B cell (primary cell): ENCODE measurements at regions of chr11 and their contacts with region 1.

Region 1: GRCh38 chr11:72238040-72238450 is 5.9 kb downstream of the PHOX2A start:
- DNase-seq: peak; percentile 61
- ATAC-seq: peak; percentile 67
- H3K4me3 ChIP-seq: no peak overlapping the region
- H3K4me3 Mint-ChIP-seq: peak overlapping the region; percentile 19
- H3K27ac ChIP-seq: no peak overlapping the region
- H3K27ac Mint-ChIP-seq: no peak overlapping the region
- H3K4me1 ChIP-seq: peaks cover 34% of the 10 kb centered on the region in 2 donors
- H3K4me1 Mint-ChIP-seq: peaks cover 35% of the 10 kb centered on the region
- H3K27me3 ChIP-seq: peaks cover 0 to 34% (median 18%) of the 10 kb centered on the region in 4 experiments
- H3K27me3 Mint-ChIP-seq: peaks cover 31% of the 10 kb centered on the region
- CTCF ChIP-seq: peak; percentile 58

Region 2: DNA sequence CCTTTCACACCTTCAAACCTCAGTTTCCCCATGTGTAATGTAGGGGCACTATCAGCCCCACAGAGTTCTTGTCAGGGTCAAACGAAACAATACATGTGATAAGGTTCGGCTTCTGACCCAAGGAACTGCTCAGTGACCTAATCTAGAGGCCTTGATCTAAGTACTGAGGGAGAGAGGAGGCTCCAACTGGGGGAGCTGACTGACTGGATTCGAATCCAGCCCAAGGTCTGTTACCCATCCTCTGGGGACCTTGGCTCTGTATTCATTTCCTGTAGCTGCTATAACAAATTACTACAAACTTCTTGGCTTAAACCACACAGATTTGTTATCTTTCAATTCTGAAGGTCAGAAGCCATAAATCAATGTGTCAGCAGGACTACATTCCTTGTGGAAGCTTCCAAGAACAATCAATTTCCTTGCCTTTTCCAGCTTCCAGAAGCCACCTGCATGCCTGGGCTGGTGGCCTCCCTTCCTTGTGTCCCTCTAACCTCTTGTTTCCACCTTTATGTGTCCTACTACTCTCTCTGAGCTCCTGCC is 114.9 kb before region 1 on chr11:
- CTCF ChIA-PET with region 1: no interaction called
- POLR2A ChIA-PET with region 1: no interaction called
- intact Hi-C with region 1: no loop called
- DNase-seq: no peak
- ATAC-seq: no peak
- H3K4me3 ChIP-seq: no peak overlapping the region
- H3K4me3 Mint-ChIP-seq: no peak overlapping the region
- H3K27ac ChIP-seq: no peak overlapping the region
- H3K27ac Mint-ChIP-seq: no peak overlapping the region
- H3K4me1 ChIP-seq: no peaks in the 10 kb centered on the region
- H3K4me1 Mint-ChIP-seq: no peaks in the 10 kb centered on the region
- H3K27me3 ChIP-seq: peaks cover 0 to 13% (median 2%) of the 10 kb centered on the region in 4 experiments
- H3K27me3 Mint-ChIP-seq: peaks cover 38% of the 10 kb centered on the region
- CTCF ChIP-seq: no peak

Region 3: GRCh38 chr11:72154816-72155215 is 83.2 kb before region 1 on chr11:
- CTCF ChIA-PET with region 1: no interaction called
- POLR2A ChIA-PET with region 1: no interaction called
- intact Hi-C with region 1: no loop called
- DNase-seq: no peak
- ATAC-seq: no peak
- H3K4me3 ChIP-seq: no peak overlapping the region
- H3K4me3 Mint-ChIP-seq: no peak overlapping the region
- H3K27ac ChIP-seq: no peak overlapping the region
- H3K27ac Mint-ChIP-seq: no peak overlapping the region
- H3K4me1 ChIP-seq: no peaks in the 10 kb centered on the region
- H3K4me1 Mint-ChIP-seq: no peaks in the 10 kb centered on the region
- H3K27me3 ChIP-seq: peaks cover 0 to 3% (median 1%) of the 10 kb centered on the region in 4 experiments
- H3K27me3 Mint-ChIP-seq: peaks cover 5% of the 10 kb centered on the region
- CTCF ChIP-seq: no peak

Region 4: GRCh38 chr11:72179804-72180396 is 58.1 kb before region 1 on chr11:
- CTCF ChIA-PET with region 1: interaction called, 7 read pairs
- POLR2A ChIA-PET with region 1: no interaction called
- intact Hi-C with region 1: loop called (anchors 1 kb)
- DNase-seq: no peak
- ATAC-seq: no peak
- H3K4me3 ChIP-seq: no peak overlapping the region
- H3K4me3 Mint-ChIP-seq: no peak overlapping the region
- H3K27ac ChIP-seq: no peak overlapping the region
- H3K27ac Mint-ChIP-seq: no peak overlapping the region
- H3K4me1 ChIP-seq: no peaks in the 10 kb centered on the region
- H3K4me1 Mint-ChIP-seq: peaks cover 1% of the 10 kb centered on the region
- H3K27me3 ChIP-seq: peaks cover 0 to 16% (median 1%) of the 10 kb centered on the region in 4 experiments
- H3K27me3 Mint-ChIP-seq: peaks cover 25% of the 10 kb centered on the region
- CTCF ChIP-seq: no peak